PC-9 (cell line): ENCODE measurements at regions of chr12 and their contacts with region 1.

Region 1: GRCh38 chr12:38788106-38788505 is 117.3 kb downstream of the CPNE8 start:
- DNase-seq: no peak
- H3K4me3 ChIP-seq: no peak overlapping the region
- H3K27ac ChIP-seq: no peak overlapping the region
- H3K4me1 ChIP-seq: no peaks in the 10 kb centered on the region
- H3K27me3 ChIP-seq: no peaks in the 10 kb centered on the region
- CTCF ChIP-seq: no peak

Region 2: DNA sequence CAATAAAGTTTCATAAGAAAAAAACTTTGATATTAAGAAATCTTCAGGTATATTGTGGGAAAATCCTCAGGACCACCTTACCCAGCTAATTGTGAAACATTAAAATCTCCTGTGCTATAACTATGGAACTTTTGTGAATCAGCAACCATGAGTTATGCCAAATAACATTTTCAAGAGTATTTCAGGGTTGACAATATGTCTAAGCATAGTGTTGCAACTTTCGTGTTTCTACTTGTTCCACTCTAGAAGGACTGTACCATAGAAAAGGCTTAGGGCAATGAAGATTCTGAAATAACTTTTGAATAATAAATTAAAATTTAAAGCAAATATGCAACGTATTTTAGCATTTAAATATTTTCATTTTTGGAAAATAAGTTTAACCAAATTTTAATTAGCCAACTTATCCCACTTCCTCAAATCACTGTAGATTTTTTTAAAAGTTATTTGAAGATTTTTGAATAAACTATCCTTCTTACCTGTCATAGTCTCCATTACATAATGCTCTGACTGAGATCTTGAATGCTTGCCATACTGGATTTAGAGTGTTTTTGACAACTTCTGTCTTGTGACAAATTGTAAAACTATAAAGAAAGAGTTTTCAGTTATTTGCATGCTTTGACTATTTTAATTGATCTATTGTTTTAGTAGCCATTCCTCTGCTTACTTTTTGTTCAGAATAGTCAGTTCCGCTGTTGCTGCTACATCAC is 26.3 kb before region 1 on chr12:
- CTCF ChIA-PET with region 1: no interaction called
- POLR2A ChIA-PET with region 1: interaction called, 14 read pairs
- intact Hi-C with region 1: no loop called
- DNase-seq: no peak
- H3K4me3 ChIP-seq: no peak overlapping the region
- H3K27ac ChIP-seq: no peak overlapping the region
- H3K4me1 ChIP-seq: no peaks in the 10 kb centered on the region
- H3K27me3 ChIP-seq: no peaks in the 10 kb centered on the region
- CTCF ChIP-seq: no peak

Region 3: GRCh38 chr12:39176356-39176755 is 388.2 kb after region 1 on chr12:
- CTCF ChIA-PET with region 1: no interaction called
- POLR2A ChIA-PET with region 1: no interaction called
- intact Hi-C with region 1: no loop called
- DNase-seq: no peak
- H3K4me3 ChIP-seq: no peak overlapping the region
- H3K27ac ChIP-seq: no peak overlapping the region
- H3K4me1 ChIP-seq: no peaks in the 10 kb centered on the region
- H3K27me3 ChIP-seq: no peaks in the 10 kb centered on the region
- CTCF ChIP-seq: no peak